Left colon (tissue), 2 donors: ENCODE measurements at regions of chr15 and their contacts with region 1.

Region 1: GRCh38 chr15:29728418-29728817 is 93.8 kb downstream of the TJP1 start:
- DNase-seq: no peak
- ATAC-seq: no peak

Region 2: GRCh38 chr15:29925227-29926082 is 197.0 kb after region 1 on chr15:
- intact Hi-C with region 1: loop called in 1 of 2 experiments (anchors 10 kb)
- DNase-seq: peak; percentile 63 to 76
- ATAC-seq: peak; percentile 93